Tibial artery (tissue), 4 donors: ENCODE measurements at regions of chr3 and their contacts with region 1.

Region 1: DNA sequence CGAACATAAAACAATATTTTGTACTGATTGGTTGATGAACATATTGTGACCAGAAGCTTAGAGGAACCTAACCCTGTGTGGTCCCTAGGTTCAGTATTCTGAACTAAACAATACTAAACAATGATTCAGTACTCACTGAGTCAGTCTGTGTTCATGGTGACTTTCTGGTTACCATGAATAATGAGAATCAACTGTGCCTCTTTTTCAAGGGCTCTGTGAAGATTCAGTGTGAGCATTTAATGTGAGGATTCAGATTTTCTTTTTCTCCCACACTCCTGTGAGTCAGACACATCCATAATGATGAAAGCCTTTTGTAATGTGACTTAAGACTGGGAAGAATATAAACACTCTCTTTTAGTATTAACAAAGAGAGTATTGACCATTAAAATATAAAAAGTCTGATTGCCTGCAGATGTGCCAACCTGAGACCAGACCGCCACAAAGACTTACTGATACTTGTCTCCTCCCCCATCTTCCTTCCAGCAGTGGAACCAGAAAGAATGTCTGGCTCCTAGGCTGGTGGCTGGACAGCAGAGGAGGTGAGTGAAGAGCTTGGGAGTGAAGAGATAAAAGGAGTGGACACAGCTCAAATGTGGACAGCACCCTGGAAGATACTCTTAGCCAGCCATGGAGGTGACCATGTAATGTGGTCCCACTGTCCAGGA is 17.6 kb upstream of the ACTL6A start:
- DNase-seq: no peak
- H3K4me3 ChIP-seq: no peak overlapping the region
- H3K27ac ChIP-seq: no peak overlapping the region
- H3K4me1 ChIP-seq: no peaks in the 10 kb centered on the region
- H3K27me3 ChIP-seq: no peaks in the 10 kb centered on the region
- CTCF ChIP-seq: no peak

Region 2: GRCh38 chr3:179454887-179455286 is 90.2 kb before region 1 on chr3:
- intact Hi-C with region 1: loop called (anchors 5 kb)
- DNase-seq: no peak
- H3K4me3 ChIP-seq: no peak overlapping the region
- H3K27ac ChIP-seq: no peak overlapping the region
- H3K4me1 ChIP-seq: peaks cover 0 to 12% (median under 1%) of the 10 kb centered on the region in 4 donors
- H3K27me3 ChIP-seq: no peaks in the 10 kb centered on the region
- CTCF ChIP-seq: no peak